Astrocyte of the cerebellum (primary cell): ENCODE measurements at regions of chr20 and their contacts with region 1.

Region 1: GRCh38 chr20:35771689-35772562 is at the start of gene PHF20:
- DNase-seq: peak; percentile 88
- H3K4me3 ChIP-seq: peak within 1 kb of the TSS; percentile 90
- CTCF ChIP-seq: no peak

Region 2: DNA sequence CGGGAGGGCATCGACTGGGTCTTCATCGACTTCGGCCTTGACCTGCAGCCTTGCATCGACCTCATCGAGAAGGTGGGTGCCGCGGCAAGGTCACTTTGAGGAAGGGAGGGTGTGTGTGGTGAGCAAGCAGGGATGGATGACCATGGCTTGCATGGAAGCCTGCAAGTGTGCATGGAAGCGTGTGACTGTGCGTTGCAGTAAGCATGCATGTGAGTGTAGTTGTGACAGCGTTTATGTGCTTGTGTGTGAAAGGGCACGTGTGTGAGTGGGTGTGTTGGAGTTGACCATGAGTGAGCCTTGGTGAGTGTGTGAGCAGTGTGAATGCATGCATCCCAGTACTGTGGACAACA is 783.8 kb before region 1 on chr20:
- in situ Hi-C with region 1: no loop called
- DNase-seq: no peak
- H3K4me3 ChIP-seq: no peak overlapping the region
- CTCF ChIP-seq: no peak

Region 3: GRCh38 chr20:35837577-35838198 is 65.8 kb after region 1 on chr20:
- in situ Hi-C with region 1: loop called (anchors 10 kb)
- DNase-seq: no peak
- H3K4me3 ChIP-seq: no peak overlapping the region
- CTCF ChIP-seq: no peak

Region 4: GRCh38 chr20:35866418-35867197 is 94.7 kb after region 1 on chr20:
- in situ Hi-C with region 1: loop called (anchors 10 kb)
- DNase-seq: no peak
- H3K4me3 ChIP-seq: no peak overlapping the region
- CTCF ChIP-seq: no peak